Thyroid gland (tissue), 4 donors: ENCODE measurements at regions of chr2 and their contacts with region 1.

Region 1: DNA sequence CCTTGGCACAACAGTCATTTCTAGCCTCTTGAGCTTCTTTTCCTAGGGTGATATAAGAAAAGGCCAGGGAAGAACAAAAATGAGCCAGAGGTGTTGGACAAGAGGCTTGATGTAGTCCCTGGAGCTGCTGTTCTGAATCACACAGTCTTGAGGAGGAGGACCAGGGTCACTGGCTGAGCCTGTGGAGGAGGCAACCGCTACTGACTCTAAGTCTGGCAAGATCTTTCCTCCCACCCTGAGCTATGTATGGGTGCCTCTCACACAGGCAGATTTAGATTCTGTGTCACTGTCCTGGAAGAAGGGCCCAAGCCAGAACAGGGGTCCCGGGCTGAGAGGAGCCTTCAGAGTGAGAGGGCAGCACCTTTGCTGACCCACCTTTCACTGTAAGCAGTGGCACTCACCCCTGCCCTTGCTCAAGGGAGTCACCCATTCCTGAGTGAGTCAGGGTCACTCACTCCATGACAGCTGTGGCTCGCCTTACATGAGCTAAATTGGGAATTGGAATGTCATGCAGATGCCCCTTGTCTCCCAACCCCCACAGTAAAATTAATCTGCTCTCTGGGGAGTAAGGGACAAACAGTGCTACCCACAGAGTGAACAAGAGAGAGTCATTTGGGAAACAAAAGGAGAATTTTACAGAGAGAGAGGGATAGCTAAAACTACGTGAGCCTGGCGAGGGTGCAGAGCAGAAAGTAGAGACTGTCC is at the start of gene TRIM54:
- DNase-seq: no peak
- H3K4me3 ChIP-seq: no peak within 1 kb of the TSS
- H3K27ac ChIP-seq: peak within 1 kb of the TSS in 1 of 3 donors; percentile 0
- H3K4me1 ChIP-seq: peaks cover 0 to 17% of the 10 kb centered on the region in 2 donors
- H3K27me3 ChIP-seq: no peaks in the 10 kb centered on the region
- CTCF ChIP-seq: no peak
- POLR2A ChIP-seq: no peak
- total RNA-seq, gene TRIM54: 0.22 to 1.6 (median 0.54) TPM in 3 of 4 donors, not detected in the other

Region 2: DNA sequence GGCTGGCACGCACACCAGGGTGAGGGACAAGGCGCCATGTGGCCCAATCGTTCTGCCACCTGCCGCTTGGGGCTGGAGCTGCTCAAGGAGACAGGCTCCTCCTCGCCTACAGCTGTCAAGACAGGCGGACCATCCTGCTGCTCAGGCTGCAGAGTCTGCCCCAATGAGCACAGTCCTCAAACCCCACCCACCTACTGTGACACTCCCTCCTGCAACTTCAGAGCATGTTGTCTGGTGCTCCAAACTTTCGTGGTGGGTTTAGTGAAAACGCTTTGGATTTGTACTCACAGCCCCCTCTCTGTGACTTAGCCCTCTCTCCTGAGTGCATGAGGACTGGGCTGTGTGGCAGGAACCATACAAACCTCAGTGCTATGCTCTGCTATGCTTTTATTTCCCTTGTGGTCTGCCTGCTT is 541.1 kb before region 1 on chr2:
- intact Hi-C with region 1: no loop called
- DNase-seq: no peak
- H3K4me3 ChIP-seq: no peak overlapping the region
- H3K27ac ChIP-seq: no peak overlapping the region
- H3K4me1 ChIP-seq: peaks cover 7 to 8% of the 10 kb centered on the region in 2 donors
- H3K27me3 ChIP-seq: no peaks in the 10 kb centered on the region
- CTCF ChIP-seq: no peak
- POLR2A ChIP-seq: no peak

Region 3: DNA sequence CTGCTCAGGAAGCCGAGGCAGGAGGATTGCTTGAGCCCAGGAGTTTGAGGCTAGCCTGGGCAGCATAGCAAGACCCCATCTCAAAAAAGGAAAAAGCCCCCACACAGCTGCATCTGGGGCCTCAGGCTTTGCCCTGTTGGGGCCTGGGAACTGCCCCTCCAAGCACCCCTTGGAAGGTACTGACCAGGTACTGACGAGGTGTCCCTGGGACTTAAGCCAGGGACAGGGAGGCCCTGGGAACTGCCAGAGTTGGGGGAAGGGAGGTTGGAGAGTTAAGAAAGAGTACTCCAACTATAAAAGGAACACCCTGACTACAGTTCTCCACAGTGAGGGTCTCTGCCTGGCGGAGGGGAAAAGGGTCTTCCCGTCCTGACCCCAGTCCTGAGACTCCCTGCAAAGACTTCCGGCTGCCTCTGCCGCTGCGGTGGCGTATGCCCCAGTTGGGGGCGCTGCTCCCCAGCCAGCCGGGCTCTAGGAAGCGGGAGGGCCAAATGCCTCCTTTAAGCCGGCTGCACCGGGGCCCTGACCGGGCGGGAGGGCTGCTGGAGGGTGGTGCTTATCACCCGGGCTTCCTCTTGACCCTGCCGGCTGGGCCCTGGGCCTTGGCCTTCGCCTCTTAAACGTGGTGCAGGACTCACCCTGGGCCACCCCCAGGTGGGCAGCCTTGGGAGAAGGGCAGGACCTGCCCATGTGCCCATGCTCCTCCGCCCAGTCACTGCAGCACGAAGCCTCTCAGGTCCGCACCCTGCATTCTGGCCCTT is 31.9 kb before region 1 on chr2:
- intact Hi-C with region 1: loop called (anchors 5 kb)
- DNase-seq: peak; percentile 61 to 64
- H3K4me3 ChIP-seq: no peak overlapping the region
- H3K27ac ChIP-seq: no peak overlapping the region
- H3K4me1 ChIP-seq: peaks cover 0 to 7% of the 10 kb centered on the region in 2 donors
- H3K27me3 ChIP-seq: no peaks in the 10 kb centered on the region
- CTCF ChIP-seq: peak; percentile 27 to 82 (median 68)
- POLR2A ChIP-seq: no peak

Region 4: GRCh38 chr2:27461118-27461517 is 179.1 kb after region 1 on chr2:
- intact Hi-C with region 1: no loop called
- DNase-seq: peak; percentile 7 to 26
- H3K4me3 ChIP-seq: no peak overlapping the region
- H3K27ac ChIP-seq: no peak overlapping the region
- H3K4me1 ChIP-seq: no peaks in the 10 kb centered on the region
- H3K27me3 ChIP-seq: no peaks in the 10 kb centered on the region
- CTCF ChIP-seq: no peak
- POLR2A ChIP-seq: no peak